Thyroid gland (tissue), 4 donors: ENCODE measurements at regions of chr7 and their contacts with region 1.

Region 1: GRCh38 chr7:105940104-105940503 is 23.0 kb upstream of the CDHR3 start:
- DNase-seq: no peak
- H3K4me3 ChIP-seq: no peak overlapping the region
- H3K27ac ChIP-seq: no peak overlapping the region
- H3K4me1 ChIP-seq: peaks cover 16 to 22% of the 10 kb centered on the region in 2 donors
- H3K27me3 ChIP-seq: no peaks in the 10 kb centered on the region
- CTCF ChIP-seq: no peak
- POLR2A ChIP-seq: no peak

Region 2: DNA sequence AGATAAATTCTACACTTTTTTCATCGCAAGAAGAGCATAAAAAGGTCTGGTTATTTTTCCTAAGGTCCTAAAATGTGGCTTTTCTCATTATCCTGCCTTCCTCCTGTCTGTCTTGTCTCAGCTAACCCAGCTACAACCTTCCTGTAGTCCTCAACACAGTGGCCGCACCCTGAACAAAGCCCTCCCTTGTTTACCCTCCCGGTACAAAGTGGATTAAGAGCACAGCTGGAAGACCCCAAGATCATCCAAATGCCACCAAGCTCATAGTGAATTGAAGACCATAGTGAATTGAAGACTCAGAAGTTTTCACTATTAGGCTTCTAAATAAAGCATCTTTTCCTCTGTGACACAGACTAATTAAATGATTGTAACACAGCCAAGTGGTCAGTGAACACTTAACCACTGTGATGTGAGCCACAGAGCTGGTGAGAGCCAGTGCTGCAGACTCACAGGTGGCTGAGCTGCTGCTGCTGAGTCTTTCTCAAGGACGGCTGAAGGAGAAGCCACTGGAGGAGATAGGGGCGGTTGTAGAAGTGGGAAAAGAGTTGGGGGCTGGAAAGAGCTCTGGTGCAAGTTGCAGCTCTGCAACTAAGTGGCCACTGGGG is 187.3 kb before region 1 on chr7:
- intact Hi-C with region 1: no loop called
- DNase-seq: peak; percentile 10 to 13
- H3K4me3 ChIP-seq: no peak overlapping the region
- H3K27ac ChIP-seq: no peak overlapping the region
- H3K4me1 ChIP-seq: peaks cover 10% of the 10 kb centered on the region in 2 donors
- H3K27me3 ChIP-seq: no peaks in the 10 kb centered on the region
- CTCF ChIP-seq: no peak
- POLR2A ChIP-seq: no peak

Region 3: GRCh38 chr7:105975770-105976422 is 35.8 kb after region 1 on chr7:
- intact Hi-C with region 1: loop called (anchors 5 kb)
- DNase-seq: no peak
- H3K4me3 ChIP-seq: no peak overlapping the region
- H3K27ac ChIP-seq: no peak overlapping the region
- H3K4me1 ChIP-seq: peaks cover 7 to 29% of the 10 kb centered on the region in 2 donors
- H3K27me3 ChIP-seq: no peaks in the 10 kb centered on the region
- CTCF ChIP-seq: no peak
- POLR2A ChIP-seq: no peak

Region 4: GRCh38 chr7:106166655-106167342 is 226.7 kb after region 1 on chr7:
- intact Hi-C with region 1: loop called (anchors 10 kb)
- DNase-seq: peak; percentile 47 to 51
- H3K4me3 ChIP-seq: no peak overlapping the region
- H3K27ac ChIP-seq: no peak overlapping the region
- H3K4me1 ChIP-seq: peaks cover 0 to 10% of the 10 kb centered on the region in 2 donors
- H3K27me3 ChIP-seq: no peaks in the 10 kb centered on the region
- CTCF ChIP-seq: peak; percentile 57 to 96 (median 82)
- POLR2A ChIP-seq: no peak

Region 5: GRCh38 chr7:106205621-106206222 is 265.6 kb after region 1 on chr7:
- intact Hi-C with region 1: no loop called
- DNase-seq: no peak
- H3K4me3 ChIP-seq: no peak overlapping the region
- H3K27ac ChIP-seq: no peak overlapping the region
- H3K4me1 ChIP-seq: no peaks in the 10 kb centered on the region
- H3K27me3 ChIP-seq: no peaks in the 10 kb centered on the region
- CTCF ChIP-seq: no peak
- POLR2A ChIP-seq: no peak